Motor neuron (in vitro differentiated cells): ENCODE measurements at regions of chr6 and their contacts with region 1.

Region 1: GRCh38 chr6:109690737-109691621 is at the starts of genes AK9 and FIG4:
- ATAC-seq: peak; percentile 92 to 98 (median 97)
- H3K4me3 ChIP-seq: peak within 1 kb of the TSS; percentile 77 to 99 (median 91)
- H3K27ac ChIP-seq: peak within 1 kb of the TSS; percentile 54 to 69
- H3K4me1 ChIP-seq: peaks cover 0 to 7% of the 10 kb centered on the region in 2 donors
- total RNA-seq, gene AK9: 7.0 to 18.1 (median 13.3) TPM
- total RNA-seq, gene FIG4: 5.2 to 25.1 (median 18.7) TPM

Region 2: GRCh38 chr6:109260126-109260525 is 430.9 kb before region 1 on chr6:
- in situ Hi-C with region 1: no loop called
- ATAC-seq: no peak
- H3K4me3 ChIP-seq: no peak overlapping the region
- H3K27ac ChIP-seq: no peak overlapping the region
- H3K4me1 ChIP-seq: no peaks in the 10 kb centered on the region

Region 3: GRCh38 chr6:109513571-109514071 is 177.4 kb before region 1 on chr6:
- in situ Hi-C with region 1: loop called in 1 of 9 experiments (anchors 25 kb)
- ATAC-seq: peak in 5 of 8 experiments; percentile 42 to 65 (median 49)
- H3K4me3 ChIP-seq: no peak overlapping the region
- H3K27ac ChIP-seq: no peak overlapping the region
- H3K4me1 ChIP-seq: peaks cover 0 to 7% of the 10 kb centered on the region in 2 donors

Region 4: GRCh38 chr6:109526905-109527628 is 163.9 kb before region 1 on chr6:
- in situ Hi-C with region 1: loop called in 2 of 9 experiments (anchors 10 to 25 kb)
- ATAC-seq: peak; percentile 58 to 96 (median 80)
- H3K4me3 ChIP-seq: no peak overlapping the region
- H3K27ac ChIP-seq: no peak overlapping the region
- H3K4me1 ChIP-seq: no peaks in the 10 kb centered on the region

Region 5: GRCh38 chr6:109595998-109596397 is 95.0 kb before region 1 on chr6:
- in situ Hi-C with region 1: loop called in 1 of 9 experiments (anchors 10 kb)
- ATAC-seq: peak in 3 of 8 experiments; percentile 77 to 82 (median 79)
- H3K4me3 ChIP-seq: no peak overlapping the region
- H3K27ac ChIP-seq: no peak overlapping the region
- H3K4me1 ChIP-seq: no peaks in the 10 kb centered on the region

Region 6: GRCh38 chr6:109606359-109606758 is 84.6 kb before region 1 on chr6:
- in situ Hi-C with region 1: no loop called
- ATAC-seq: no peak
- H3K4me3 ChIP-seq: no peak overlapping the region
- H3K27ac ChIP-seq: no peak overlapping the region
- H3K4me1 ChIP-seq: no peaks in the 10 kb centered on the region